Common myeloid progenitor, CD34-positive (primary cell): ENCODE measurements at regions of chr2 and their contacts with region 1.

Region 1: DNA sequence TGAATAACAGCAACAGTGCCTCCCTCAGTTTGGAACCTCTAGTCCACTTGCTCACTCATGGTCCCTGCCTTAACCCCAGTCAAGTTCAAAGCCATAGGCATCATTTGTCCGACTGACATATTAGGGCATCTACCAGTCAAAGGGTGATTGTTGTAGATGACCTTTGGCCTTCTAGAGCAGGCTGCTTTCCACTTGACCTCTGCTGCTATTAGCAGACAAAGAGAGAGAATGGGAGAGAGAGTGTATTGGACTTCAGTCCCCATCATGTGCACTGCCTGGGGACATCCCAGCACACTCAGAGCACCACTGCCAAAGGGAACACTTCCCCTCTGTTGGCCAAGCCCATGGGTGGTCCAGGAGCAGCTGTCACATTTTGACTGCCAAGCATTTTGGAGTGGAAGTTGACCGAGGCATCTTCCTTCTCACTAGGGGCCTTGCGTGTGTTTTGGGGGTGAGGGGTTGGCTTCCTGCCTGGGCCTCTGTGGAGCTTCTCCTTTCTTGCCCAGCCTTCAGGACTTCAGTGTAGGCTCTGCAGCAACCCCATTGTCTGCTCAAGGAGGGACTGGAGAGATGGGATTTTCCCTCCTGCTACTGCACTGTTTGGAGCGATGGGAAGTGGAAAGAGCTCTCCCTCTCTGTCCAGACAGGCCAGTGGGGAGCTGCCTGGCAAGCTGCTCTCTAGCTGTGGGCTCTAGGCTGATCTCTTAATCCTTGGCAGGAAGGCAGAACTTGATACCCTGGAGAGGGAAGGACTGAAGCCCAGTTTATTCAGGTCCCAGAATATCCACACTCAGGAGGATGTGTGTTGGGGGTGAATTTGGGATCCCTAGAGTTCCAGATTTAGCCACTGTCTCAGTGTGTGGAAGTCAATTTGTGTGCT is 68.1 kb downstream of the TMEM247 start:
- DNase-seq: peak in 2 of 3 donors; percentile 69 to 71
- H3K4me3 ChIP-seq: peak overlapping the region in 4 of 7 experiments; percentile 6 to 59 (median 43)
- H3K27ac ChIP-seq: peak overlapping the region; percentile 29 to 60
- H3K4me1 ChIP-seq: peaks cover 28 to 62% (median 56%) of the 10 kb centered on the region in 4 experiments
- H3K27me3 ChIP-seq: no peaks in the 10 kb centered on the region

Region 2: DNA sequence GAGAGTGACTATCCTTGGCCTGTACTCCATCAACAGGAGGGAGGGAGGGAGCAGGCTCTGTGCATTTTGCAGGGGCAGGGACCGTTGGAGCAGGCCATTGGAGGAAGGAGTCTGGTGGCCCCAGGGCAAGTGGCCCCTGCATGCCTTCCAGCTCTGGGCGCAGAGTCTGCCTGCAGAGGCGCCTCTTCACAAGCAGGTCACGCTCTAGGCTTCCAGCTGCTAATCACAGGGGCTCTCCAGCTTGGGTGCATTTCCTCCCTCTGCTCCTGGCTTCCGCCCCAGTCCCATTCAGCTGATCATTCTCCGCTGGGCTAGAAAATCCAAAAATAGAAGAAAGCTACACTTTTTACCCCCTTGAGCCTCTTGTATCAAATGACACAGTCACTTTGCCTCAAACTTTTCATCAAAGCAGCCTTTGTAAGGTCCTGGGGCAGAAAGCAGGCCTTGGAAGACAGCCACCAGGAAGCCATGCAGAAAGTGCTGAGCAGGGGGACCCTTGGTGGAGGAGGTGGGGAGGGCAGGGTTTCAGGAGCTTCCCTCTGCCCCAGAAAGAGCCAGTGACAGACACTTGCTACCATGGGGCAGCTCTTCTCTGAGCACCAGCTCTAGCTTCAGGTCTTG is 56.8 kb before region 1 on chr2:
- CTCF ChIA-PET with region 1: interaction called, 14 read pairs
- POLR2A ChIA-PET with region 1: interaction called, 3 read pairs
- DNase-seq: peak; percentile 45 to 93 (median 90)
- H3K4me3 ChIP-seq: peak overlapping the region in 3 of 7 experiments; percentile 12 to 35 (median 14)
- H3K27ac ChIP-seq: no peak overlapping the region
- H3K4me1 ChIP-seq: peaks cover 4 to 27% (median 24%) of the 10 kb centered on the region in 4 experiments
- H3K27me3 ChIP-seq: no peaks in the 10 kb centered on the region

Region 3: DNA sequence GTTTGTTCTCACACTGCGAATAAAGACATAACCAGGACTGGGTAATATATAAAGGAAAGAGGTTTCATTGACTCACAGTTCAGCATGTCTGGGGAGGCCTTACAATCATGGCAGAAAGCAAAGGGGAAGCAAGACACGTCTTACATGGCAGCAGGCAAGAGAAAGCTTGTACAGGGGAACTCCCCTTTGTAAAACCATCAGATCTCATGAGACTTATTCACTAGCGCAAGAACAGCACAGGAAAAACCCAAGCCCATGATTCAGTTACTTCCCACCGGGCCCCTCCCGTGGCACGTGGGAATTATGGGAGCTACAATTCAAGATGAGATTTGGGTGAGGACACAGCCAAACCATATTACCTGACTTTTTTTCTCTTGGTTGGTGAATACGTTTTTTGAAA is 16.8 kb before region 1 on chr2:
- CTCF ChIA-PET with region 1: no interaction called
- POLR2A ChIA-PET with region 1: no interaction called
- DNase-seq: no peak
- H3K4me3 ChIP-seq: no peak overlapping the region
- H3K27ac ChIP-seq: no peak overlapping the region
- H3K4me1 ChIP-seq: peaks cover 6 to 16% (median 11%) of the 10 kb centered on the region in 4 experiments
- H3K27me3 ChIP-seq: no peaks in the 10 kb centered on the region